HepG2 (cell line): ENCODE measurements at regions of chr7 and their contacts with region 1.

Region 1: GRCh38 chr7:116588641-116589594 is 64.1 kb downstream of the CAV1 start:
- DNase-seq: peak; percentile 40
- ATAC-seq: peak; percentile 64
- H3K4me3 ChIP-seq: no peak overlapping the region
- H3K27ac ChIP-seq: no peak overlapping the region
- H3K4me1 ChIP-seq: peaks cover 29% of the 10 kb centered on the region
- H3K27me3 ChIP-seq: peaks cover 0 to 9% of the 10 kb centered on the region in 2 experiments; a peak in 2 of 5 replicates
- CTCF ChIP-seq: peak; percentile 68
- EP300 ChIP-seq: no peak
- POLR2A ChIP-seq: no peak
- RAD21 ChIP-seq: no peak

Region 2: GRCh38 chr7:116138202-116138801 is 450.6 kb before region 1 on chr7:
- CTCF ChIA-PET with region 1: interaction called, 7 read pairs
- POLR2A ChIA-PET with region 1: no interaction called
- in situ Hi-C with region 1: no loop called
- intact Hi-C with region 1: loop called (anchors 1 kb)
- DNase-seq: peak; percentile 52
- ATAC-seq: peak; percentile 90
- H3K4me3 ChIP-seq: no peak overlapping the region
- H3K27ac ChIP-seq: no peak overlapping the region
- H3K4me1 ChIP-seq: peaks cover 13% of the 10 kb centered on the region
- H3K27me3 ChIP-seq: 0 out of 5 replicates have a peak, but pooled peaks cover 2 to 3% of the 10 kb centered on the region in 2 experiments
- CTCF ChIP-seq: peak; percentile 81
- EP300 ChIP-seq: no peak
- POLR2A ChIP-seq: no peak
- RAD21 ChIP-seq: peak; percentile 43; the same call in 1 of the 2 replicates

Region 3: DNA sequence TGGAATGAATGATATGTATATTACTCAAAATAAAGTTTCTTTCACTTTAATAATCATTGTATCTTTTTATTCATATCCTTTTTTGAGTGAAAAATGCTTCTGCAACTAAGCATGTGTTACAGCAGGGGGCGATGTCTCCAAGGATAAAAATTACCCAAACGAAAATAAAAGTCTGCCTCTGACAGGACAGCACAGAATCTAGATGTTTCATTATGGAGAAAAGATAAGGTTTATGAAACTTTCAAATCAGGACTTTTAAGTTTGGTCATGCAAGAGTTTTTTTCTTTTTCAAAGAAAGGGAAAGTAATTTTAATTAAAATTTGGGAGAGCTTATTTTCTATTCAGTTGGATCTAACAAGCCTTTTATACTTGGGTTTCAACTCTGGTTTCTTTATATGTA is 330.2 kb before region 1 on chr7:
- CTCF ChIA-PET with region 1: interaction called, 39 read pairs
- POLR2A ChIA-PET with region 1: no interaction called
- in situ Hi-C with region 1: loop called (anchors 5 kb)
- intact Hi-C with region 1: loop called (anchors 1 kb)
- DNase-seq: peak; percentile 22
- ATAC-seq: no peak
- H3K4me3 ChIP-seq: no peak overlapping the region
- H3K27ac ChIP-seq: no peak overlapping the region
- H3K4me1 ChIP-seq: no peaks in the 10 kb centered on the region
- H3K27me3 ChIP-seq: no peaks in the 10 kb centered on the region
- CTCF ChIP-seq: peak; percentile 66
- EP300 ChIP-seq: no peak
- POLR2A ChIP-seq: no peak
- RAD21 ChIP-seq: peak; percentile 57; the same call in 1 of the 2 replicates

Region 4: DNA sequence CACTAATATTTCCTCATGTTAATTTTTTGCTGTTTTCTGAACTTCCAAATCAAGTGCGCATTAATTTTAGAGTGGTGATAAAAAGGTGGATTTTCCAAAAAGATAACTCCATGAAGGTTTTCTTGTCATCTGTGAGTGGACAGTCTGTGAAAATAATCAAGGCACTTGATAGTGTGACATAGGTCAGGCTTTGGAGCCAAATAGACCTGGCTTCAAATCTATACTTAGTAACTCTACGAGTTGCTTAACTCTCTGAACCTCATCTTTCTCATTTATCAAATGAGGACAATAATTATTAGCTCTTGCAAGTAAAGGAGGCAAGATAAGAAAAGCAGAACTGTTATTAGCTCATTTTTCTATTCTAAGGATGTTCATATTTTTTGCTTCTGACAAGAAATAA is 58.4 kb after region 1 on chr7:
- CTCF ChIA-PET with region 1: no interaction called
- POLR2A ChIA-PET with region 1: no interaction called
- in situ Hi-C with region 1: no loop called
- intact Hi-C with region 1: no loop called
- DNase-seq: no peak
- ATAC-seq: no peak
- H3K4me3 ChIP-seq: no peak overlapping the region
- H3K27ac ChIP-seq: no peak overlapping the region
- H3K4me1 ChIP-seq: no peaks in the 10 kb centered on the region
- H3K27me3 ChIP-seq: no peaks in the 10 kb centered on the region; a peak in 1 of 5 replicates
- CTCF ChIP-seq: no peak
- EP300 ChIP-seq: no peak
- POLR2A ChIP-seq: no peak
- RAD21 ChIP-seq: no peak

Region 5: DNA sequence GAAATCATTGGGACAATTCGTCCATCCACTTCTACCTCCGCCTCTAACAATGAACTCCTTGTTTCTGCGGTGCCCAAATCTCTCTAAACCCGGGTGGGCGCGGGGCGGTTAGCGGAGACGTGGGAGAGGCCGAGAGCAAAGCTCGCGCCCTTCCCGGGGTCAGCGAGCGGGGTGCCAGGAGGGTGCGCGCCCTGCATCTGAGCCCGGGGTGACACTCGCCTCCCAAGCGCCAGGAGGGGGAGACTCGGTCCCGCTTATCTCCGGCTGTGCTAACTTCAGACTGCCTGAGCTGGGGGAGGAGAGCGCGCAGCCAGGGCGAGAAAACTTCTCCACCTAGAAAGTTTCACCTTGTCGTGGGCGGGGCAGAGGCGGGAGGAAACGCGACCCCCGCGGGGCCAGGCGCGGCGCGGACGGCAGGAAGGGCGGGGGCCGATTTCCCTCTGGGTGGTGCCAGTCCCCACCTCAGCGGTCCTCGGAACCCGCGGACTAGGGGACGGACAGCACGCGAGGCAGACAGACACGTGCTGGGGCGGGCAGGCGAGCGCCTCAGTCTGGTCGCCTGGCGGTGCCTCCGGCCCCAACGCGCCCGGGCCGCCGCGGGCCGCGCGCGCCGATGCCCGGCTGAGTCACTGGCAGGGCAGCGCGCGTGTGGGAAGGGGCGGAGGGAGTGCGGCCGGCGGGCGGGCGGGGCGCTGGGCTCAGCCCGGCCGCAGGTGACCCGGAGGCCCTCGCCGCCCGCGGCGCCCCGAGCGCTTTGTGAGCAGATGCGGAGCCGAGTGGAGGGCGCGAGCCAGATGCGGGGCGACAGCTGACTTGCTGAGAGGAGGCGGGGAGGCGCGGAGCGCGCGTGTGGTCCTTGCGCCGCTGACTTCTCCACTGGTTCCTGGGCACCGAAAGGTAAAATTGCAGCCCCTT is 83.0 kb after region 1 on chr7 and contains the start of gene MET:
- CTCF ChIA-PET with region 1: no interaction called
- POLR2A ChIA-PET with region 1: no interaction called
- in situ Hi-C with region 1: loop called (anchors 5 kb)
- intact Hi-C with region 1: loop called (anchors 2 kb)
- DNase-seq: peak; percentile 80
- ATAC-seq: peak; percentile 96
- H3K4me3 ChIP-seq: peak within 1 kb of the TSS; percentile 74 to 97 (median 77)
- H3K27ac ChIP-seq: peak within 1 kb of the TSS; percentile 72
- H3K4me1 ChIP-seq: peaks cover 37% of the 10 kb centered on the region
- H3K27me3 ChIP-seq: no peaks in the 10 kb centered on the region; a peak in 1 of 5 replicates
- CTCF ChIP-seq: peak; percentile 97
- EP300 ChIP-seq: peak in 1 of 2 experiments; percentile 40; a peak in 1 of 4 replicates
- POLR2A ChIP-seq: peak in 1 of 2 experiments; percentile 65; a peak in 1 of 4 replicates
- RAD21 ChIP-seq: peak; percentile 93
- total RNA-seq, gene MET: 23.3 and 31.5 TPM in 2 replicates

Region 6: DNA sequence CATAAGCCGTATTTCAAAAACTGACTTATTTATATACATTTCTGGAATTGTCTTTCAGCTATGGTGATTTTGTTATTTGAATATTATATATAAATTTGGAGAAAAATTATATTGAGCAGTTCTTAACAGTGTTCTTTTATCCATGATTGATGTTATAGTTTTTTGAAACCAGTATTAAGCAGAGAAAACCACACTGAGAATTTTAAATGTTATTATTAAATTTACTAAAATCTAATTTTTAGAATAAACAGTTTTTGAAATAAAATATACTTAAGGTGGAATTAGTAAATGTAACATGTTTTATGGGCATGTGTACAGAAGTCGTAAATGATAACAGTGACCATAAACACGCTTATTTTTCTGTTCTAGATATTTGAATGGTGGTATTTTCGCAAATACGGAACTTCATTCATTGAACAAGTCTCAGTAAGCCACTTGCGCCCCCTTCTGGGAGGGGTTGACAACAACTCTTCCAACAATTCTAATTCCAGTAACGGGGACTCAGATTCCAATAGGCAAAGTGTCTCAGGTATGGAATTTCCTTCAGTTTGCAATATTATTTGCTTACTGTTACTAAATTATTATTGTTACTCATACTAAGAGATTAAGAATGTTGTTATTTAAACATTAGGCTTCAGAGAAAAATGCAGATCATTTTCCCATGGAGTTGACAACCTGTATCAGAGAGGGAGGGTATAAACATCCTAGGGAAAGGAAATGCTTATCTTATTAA is 530.4 kb after region 1 on chr7:
- CTCF ChIA-PET with region 1: no interaction called
- POLR2A ChIA-PET with region 1: no interaction called
- in situ Hi-C with region 1: no loop called
- intact Hi-C with region 1: loop called (anchors 10 kb)
- DNase-seq: peak; percentile 72
- ATAC-seq: peak; percentile 57; the same call in 2 of the 3 replicates
- H3K4me3 ChIP-seq: no peak overlapping the region
- H3K27ac ChIP-seq: no peak overlapping the region
- H3K4me1 ChIP-seq: peaks cover 3% of the 10 kb centered on the region
- H3K27me3 ChIP-seq: no peaks in the 10 kb centered on the region
- CTCF ChIP-seq: peak; percentile 86
- EP300 ChIP-seq: no peak
- POLR2A ChIP-seq: no peak
- RAD21 ChIP-seq: peak; percentile 70

Region 7: DNA sequence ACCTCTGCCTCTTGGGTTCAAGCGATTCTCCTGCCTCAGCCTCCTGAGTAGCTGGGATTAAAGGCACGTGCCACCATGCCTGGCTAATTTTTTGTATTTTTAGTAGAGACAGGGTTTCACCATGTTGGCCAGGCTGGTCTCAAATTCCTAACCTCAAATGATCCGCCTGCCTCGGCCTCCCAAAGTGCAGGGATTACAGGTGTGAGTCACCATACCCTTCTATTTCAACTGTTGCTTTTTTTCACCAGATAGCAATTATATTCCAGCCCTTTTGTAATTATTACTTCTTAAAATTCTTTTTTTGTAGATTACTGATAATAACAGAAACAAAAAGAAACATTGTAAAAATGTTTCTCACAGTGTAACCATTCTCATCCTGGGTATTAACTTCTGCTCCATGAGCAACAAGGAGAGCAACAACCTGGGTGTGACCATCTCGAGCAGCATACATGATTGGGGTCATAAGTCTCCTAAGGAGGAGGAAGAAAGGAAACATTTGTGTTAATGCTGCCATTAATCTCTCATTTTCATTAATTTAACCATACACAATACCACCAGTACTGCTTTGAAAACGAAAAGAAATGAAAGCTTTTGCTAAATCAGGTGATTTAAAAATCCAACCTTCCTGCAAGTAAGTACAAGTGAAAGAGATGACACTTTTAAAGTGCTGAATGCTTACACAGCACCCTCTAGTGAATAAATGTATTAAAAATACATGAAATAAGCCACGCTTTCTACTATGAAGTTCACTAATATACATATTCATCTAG is 796.6 kb after region 1 on chr7:
- CTCF ChIA-PET with region 1: no interaction called
- POLR2A ChIA-PET with region 1: no interaction called
- in situ Hi-C with region 1: no loop called
- intact Hi-C with region 1: no loop called
- DNase-seq: no peak
- ATAC-seq: peak; percentile 56; the same call in 2 of the 3 replicates
- H3K4me3 ChIP-seq: no peak overlapping the region
- H3K27ac ChIP-seq: no peak overlapping the region
- H3K4me1 ChIP-seq: no peaks in the 10 kb centered on the region
- H3K27me3 ChIP-seq: no peaks in the 10 kb centered on the region; a peak in 1 of 5 replicates
- CTCF ChIP-seq: peak; percentile 30
- EP300 ChIP-seq: no peak
- POLR2A ChIP-seq: no peak
- RAD21 ChIP-seq: no peak